IMR-90 (cell line): ENCODE measurements at regions of chr13 and their contacts with region 1.

Region 1: GRCh38 chr13:101307181-101307701 is 109.1 kb downstream of the NALCN start:
- DNase-seq: peak; percentile 90
- ATAC-seq: peak; percentile 90
- H3K4me3 ChIP-seq: no peak overlapping the region
- H3K27ac ChIP-seq: peak overlapping the region; percentile 19; the same call in 1 of the 2 replicates
- H3K4me1 ChIP-seq: peaks cover 19% of the 10 kb centered on the region
- H3K27me3 ChIP-seq: no peaks in the 10 kb centered on the region
- CTCF ChIP-seq: no peak
- POLR2A ChIP-seq: no peak
- RAD21 ChIP-seq: no peak

Region 2: DNA sequence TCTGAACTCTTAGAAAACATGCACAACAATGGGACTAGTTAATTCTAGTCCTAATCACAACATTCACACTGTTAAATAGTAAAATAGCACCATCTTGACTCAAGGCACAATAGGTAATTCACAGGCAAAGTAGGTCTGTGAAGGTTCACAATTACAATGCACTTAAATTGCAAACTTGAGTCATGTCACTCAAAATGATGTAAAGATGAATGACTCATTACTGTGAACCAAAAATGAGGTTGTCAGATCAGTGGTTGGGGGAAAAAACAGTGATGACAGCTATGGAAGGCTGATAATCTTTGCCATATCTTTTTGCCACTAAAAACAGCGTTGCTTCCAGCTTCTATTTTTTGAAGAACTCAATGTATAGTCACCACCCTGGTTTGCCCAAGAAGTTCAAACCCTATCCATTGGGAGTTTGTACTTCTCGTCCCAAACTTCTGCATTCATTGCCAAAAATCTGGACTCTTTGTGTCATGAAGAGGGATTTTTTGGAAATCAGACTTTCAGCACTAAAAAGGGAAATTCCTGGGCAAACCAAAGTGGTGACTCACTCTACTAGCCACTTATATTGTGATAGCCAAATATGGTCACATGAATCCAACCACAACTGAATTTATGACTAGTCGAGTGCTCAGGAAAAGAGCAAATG is 431.7 kb before region 1 on chr13:
- CTCF ChIA-PET with region 1: no interaction called
- POLR2A ChIA-PET with region 1: no interaction called
- dilution Hi-C with region 1: no loop called
- in situ Hi-C with region 1: no loop called
- intact Hi-C with region 1: no loop called
- DNase-seq: peak; percentile 96
- ATAC-seq: peak; percentile 94
- H3K4me3 ChIP-seq: no peak overlapping the region
- H3K27ac ChIP-seq: peak overlapping the region; percentile 61
- H3K4me1 ChIP-seq: peaks cover 9% of the 10 kb centered on the region
- H3K27me3 ChIP-seq: no peaks in the 10 kb centered on the region
- CTCF ChIP-seq: no peak
- POLR2A ChIP-seq: no peak
- RAD21 ChIP-seq: no peak

Region 3: GRCh38 chr13:101397742-101398141 is 90.5 kb after region 1 on chr13:
- CTCF ChIA-PET with region 1: no interaction called
- POLR2A ChIA-PET with region 1: no interaction called
- dilution Hi-C with region 1: no loop called
- in situ Hi-C with region 1: no loop called
- intact Hi-C with region 1: loop called (anchors 5 kb)
- DNase-seq: peak; percentile 92
- ATAC-seq: peak; percentile 95
- H3K4me3 ChIP-seq: no peak overlapping the region
- H3K27ac ChIP-seq: no peak overlapping the region
- H3K4me1 ChIP-seq: peaks cover 12% of the 10 kb centered on the region
- H3K27me3 ChIP-seq: no peaks in the 10 kb centered on the region
- CTCF ChIP-seq: no peak
- POLR2A ChIP-seq: no peak
- RAD21 ChIP-seq: 0 out of 2 replicates have a peak, but pooled peaks have one; percentile 10

Region 4: GRCh38 chr13:101757446-101758039 is 450.3 kb after region 1 on chr13:
- CTCF ChIA-PET with region 1: no interaction called
- POLR2A ChIA-PET with region 1: no interaction called
- dilution Hi-C with region 1: no loop called
- in situ Hi-C with region 1: no loop called
- intact Hi-C with region 1: loop called (anchors 1 kb)
- DNase-seq: peak; percentile 50
- ATAC-seq: peak; percentile 73; the same call in 1 of the 2 replicates
- H3K4me3 ChIP-seq: no peak overlapping the region
- H3K27ac ChIP-seq: no peak overlapping the region
- H3K4me1 ChIP-seq: no peaks in the 10 kb centered on the region
- H3K27me3 ChIP-seq: peaks cover 2% of the 10 kb centered on the region; the same call in 1 of the 2 replicates
- CTCF ChIP-seq: peak; percentile 73
- POLR2A ChIP-seq: no peak
- RAD21 ChIP-seq: peak; percentile 80